MCF 10A (cell line): ENCODE measurements at regions of chr16 and their contacts with region 1.

Region 1: GRCh38 chr16:68264128-68265077 is at the start of gene SLC7A6:
- DNase-seq: peak; percentile 60
- H3K4me3 Mint-ChIP-seq: peak within 1 kb of the TSS; percentile 97
- H3K27ac Mint-ChIP-seq: peak within 1 kb of the TSS; percentile 92
- H3K4me1 Mint-ChIP-seq: peaks cover 22% of the 10 kb centered on the region
- H3K27me3 Mint-ChIP-seq: no peaks in the 10 kb centered on the region
- CTCF ChIP-seq: peak; percentile 81
- total RNA-seq, gene SLC7A6: 45.3 and 61.0 TPM in 2 replicates

Region 2: GRCh38 chr16:68197250-68197649 is 67.2 kb before region 1 on chr16:
- CTCF ChIA-PET with region 1: no interaction called
- POLR2A ChIA-PET with region 1: no interaction called
- intact Hi-C with region 1: no loop called
- DNase-seq: no peak
- H3K4me3 Mint-ChIP-seq: no peak overlapping the region
- H3K27ac Mint-ChIP-seq: no peak overlapping the region
- H3K4me1 Mint-ChIP-seq: peaks cover 7% of the 10 kb centered on the region
- H3K27me3 Mint-ChIP-seq: no peaks in the 10 kb centered on the region
- CTCF ChIP-seq: no peak

Region 3: DNA sequence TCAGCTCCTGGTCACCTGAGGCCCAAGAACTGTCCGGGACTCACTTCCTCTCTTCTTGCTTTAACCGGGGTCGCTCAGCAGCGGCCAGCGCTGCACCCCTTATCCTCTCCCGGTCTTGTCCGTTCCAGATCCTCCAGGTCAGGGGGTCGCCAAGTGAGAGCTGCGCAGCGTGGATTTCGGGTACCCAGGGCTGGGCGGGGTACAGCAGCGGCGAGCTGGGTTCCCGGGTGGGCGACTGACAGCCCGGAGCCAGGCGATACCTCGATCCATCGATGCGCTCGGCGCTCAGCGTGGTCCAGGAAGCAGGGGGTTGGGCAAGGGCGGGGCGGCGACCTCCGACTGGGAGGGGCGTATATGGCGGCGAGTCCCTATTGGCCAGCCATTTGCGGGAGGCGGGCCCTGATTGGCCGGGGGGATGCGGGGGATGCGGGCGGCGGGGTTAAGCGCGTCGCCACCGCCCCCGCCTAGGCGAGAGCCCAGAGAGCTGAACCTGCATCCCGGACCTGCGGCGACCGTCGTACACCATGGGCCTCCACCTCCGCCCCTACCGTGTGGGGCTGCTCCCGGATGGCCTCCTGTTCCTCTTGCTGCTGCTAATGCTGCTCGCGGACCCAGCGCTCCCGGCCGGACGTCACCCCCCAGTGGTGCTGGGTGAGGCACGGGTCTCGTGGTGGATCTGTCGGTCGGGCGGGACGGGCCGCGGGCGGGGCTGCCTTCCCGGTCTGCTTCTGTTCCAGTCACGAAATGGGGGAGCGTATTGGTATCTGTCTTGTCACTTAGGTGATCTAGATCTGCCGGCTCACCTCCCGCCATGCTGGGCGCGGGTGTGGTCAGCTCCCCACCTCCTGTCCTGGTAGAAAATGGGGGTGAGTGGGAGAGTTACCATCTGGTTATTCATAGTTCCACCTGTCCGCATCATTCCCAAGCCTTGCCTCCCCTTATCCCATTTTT is 19.2 kb before region 1 on chr16 and contains the start of gene PLA2G15:
- CTCF ChIA-PET with region 1: interaction called, 17 read pairs
- POLR2A ChIA-PET with region 1: interaction called, 20 read pairs
- intact Hi-C with region 1: no loop called
- DNase-seq: peak; percentile 93
- H3K4me3 Mint-ChIP-seq: peak within 1 kb of the TSS; percentile 83
- H3K27ac Mint-ChIP-seq: peak within 1 kb of the TSS; percentile 16
- H3K4me1 Mint-ChIP-seq: peaks cover 9% of the 10 kb centered on the region
- H3K27me3 Mint-ChIP-seq: no peaks in the 10 kb centered on the region
- CTCF ChIP-seq: no peak
- total RNA-seq, gene PLA2G15: 4.6 and 6.4 TPM in 2 replicates

Region 4: GRCh38 chr16:68275611-68276191 is 11.3 kb after region 1 on chr16:
- CTCF ChIA-PET with region 1: interaction called, 38 read pairs
- POLR2A ChIA-PET with region 1: interaction called, 30 read pairs
- intact Hi-C with region 1: no loop called
- DNase-seq: peak; percentile 71
- H3K4me3 Mint-ChIP-seq: no peak overlapping the region
- H3K27ac Mint-ChIP-seq: peak overlapping the region; percentile 77
- H3K4me1 Mint-ChIP-seq: peaks cover 20% of the 10 kb centered on the region
- H3K27me3 Mint-ChIP-seq: no peaks in the 10 kb centered on the region
- CTCF ChIP-seq: no peak

Region 5: GRCh38 chr16:68298907-68299561 is 34.6 kb after region 1 on chr16:
- CTCF ChIA-PET with region 1: interaction called, 67 read pairs
- POLR2A ChIA-PET with region 1: interaction called, 42 read pairs
- intact Hi-C with region 1: no loop called
- DNase-seq: peak; percentile 50
- H3K4me3 Mint-ChIP-seq: no peak overlapping the region
- H3K27ac Mint-ChIP-seq: peak overlapping the region; percentile 39
- H3K4me1 Mint-ChIP-seq: no peaks in the 10 kb centered on the region
- H3K27me3 Mint-ChIP-seq: no peaks in the 10 kb centered on the region
- CTCF ChIP-seq: no peak

Region 6: GRCh38 chr16:68328151-68328859 is 63.9 kb after region 1 on chr16:
- CTCF ChIA-PET with region 1: interaction called, 308 read pairs
- POLR2A ChIA-PET with region 1: interaction called, 21 read pairs
- intact Hi-C with region 1: loop called (anchors 1 kb)
- DNase-seq: peak; percentile 88
- H3K4me3 Mint-ChIP-seq: no peak overlapping the region
- H3K27ac Mint-ChIP-seq: no peak overlapping the region
- H3K4me1 Mint-ChIP-seq: peaks cover 10% of the 10 kb centered on the region
- H3K27me3 Mint-ChIP-seq: no peaks in the 10 kb centered on the region
- CTCF ChIP-seq: peak; percentile 91